ENCODE measurements at regions of chr11 and their contacts with region 1.

Region 1: DNA sequence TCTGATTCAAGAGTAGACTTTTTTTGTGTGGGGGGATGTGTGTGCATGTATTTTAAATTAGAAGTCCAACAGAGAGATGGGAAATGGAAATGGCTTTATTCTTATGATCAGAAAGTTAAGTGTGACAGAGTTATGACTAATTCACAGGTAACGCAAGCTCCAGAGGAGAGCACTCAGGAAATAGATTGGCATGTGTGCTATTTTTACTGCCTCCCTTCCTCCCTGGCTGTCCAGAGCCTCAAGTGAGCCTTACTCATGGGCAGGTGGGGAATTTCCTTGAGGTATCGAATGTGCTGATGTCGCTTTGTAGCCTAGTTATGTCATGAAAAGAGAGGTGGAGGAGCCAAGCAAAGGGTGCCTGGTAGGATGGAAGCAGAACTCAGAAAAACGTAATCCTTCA is 70.3 kb upstream of the BDNF start:
- DNase-seq: no peak
- H3K4me3 ChIP-seq: no peak overlapping the region
- H3K27ac ChIP-seq: no peak overlapping the region
- H3K4me1 ChIP-seq: no peaks in the 10 kb centered on the region
- H3K27me3 ChIP-seq: no peaks in the 10 kb centered on the region
- CTCF ChIP-seq: no peak
- POLR2A ChIP-seq: no peak

Region 2: DNA sequence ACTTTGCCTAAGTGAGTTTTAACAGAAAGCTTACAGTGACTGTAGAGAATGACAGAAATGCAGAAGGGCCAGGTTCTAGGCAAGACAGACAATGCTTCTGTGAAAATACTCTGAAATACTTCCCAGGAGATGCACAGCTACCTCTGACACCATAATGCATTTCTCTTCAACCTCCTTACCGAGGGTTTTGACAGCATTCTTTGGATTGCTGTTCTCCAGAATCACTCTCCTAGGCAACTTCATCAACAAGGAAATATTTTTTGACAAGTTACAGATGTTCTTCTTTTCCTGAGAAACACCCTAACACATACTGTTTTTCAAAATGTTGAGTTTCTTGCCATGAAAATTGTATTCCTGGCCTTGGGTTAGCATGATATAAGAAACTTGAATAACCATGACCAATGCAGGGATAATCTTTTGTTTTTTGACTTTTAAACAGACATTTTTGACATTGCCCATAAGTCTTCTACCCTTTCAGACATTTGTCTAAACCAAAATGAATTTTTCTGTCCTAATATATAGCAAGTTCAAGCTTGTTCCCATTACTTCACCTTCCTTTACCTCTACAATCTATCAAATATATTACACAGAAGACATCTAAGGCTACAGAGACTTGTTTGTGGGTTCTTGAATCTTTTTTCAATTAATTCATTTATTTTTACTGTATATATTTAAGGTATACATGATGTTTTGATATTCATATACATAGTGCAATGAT is 515.7 kb before region 1 on chr11:
- intact Hi-C with region 1: loop called (anchors 5 kb)
- DNase-seq: no peak
- H3K4me3 ChIP-seq: no peak overlapping the region
- H3K27ac ChIP-seq: no peak overlapping the region
- H3K4me1 ChIP-seq: no peaks in the 10 kb centered on the region
- H3K27me3 ChIP-seq: no peaks in the 10 kb centered on the region
- CTCF ChIP-seq: no peak
- POLR2A ChIP-seq: no peak

Region 3: DNA sequence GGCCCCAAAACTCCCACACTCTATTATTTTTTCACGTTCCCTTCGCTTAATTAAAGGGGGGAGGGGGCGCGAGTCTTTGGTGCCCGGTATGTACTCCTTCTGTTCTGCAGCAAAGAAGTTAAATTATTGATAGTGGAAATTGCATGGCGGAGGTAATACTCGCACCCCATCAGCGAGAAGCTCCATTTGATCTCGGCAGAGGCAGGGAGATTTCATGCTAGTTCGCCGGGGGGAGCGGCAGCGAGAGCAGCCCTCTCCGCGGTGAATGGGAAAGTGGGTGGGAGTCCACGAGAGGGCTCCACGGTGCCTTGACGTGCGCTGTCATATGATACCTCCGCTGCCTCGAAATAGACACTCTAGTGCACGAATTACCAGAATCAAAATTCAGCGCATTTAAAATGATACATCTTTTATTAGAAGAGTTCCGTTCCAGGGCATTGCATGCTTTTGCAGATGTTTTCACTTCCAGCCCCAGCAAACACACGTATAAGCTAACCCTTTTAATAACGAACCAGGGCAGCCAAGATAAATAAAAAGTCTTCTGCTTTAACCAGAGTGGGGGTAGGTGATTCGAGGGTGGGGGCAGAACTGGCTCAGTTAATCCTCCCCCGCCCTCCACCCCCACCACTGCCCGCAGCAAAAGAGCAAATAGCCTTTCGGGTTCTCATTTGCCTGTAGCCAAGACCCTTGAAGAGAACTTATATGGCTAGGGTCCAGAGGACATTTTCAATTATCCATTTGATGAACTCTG is 69.0 kb before region 1 on chr11:
- intact Hi-C with region 1: loop called (anchors 2 kb)
- DNase-seq: no peak
- H3K4me3 ChIP-seq: peak overlapping the region; percentile 52 to 82 (median 61)
- H3K27ac ChIP-seq: no peak overlapping the region
- H3K4me1 ChIP-seq: peaks cover 3 to 14% of the 10 kb centered on the region in 2 donors
- H3K27me3 ChIP-seq: peaks cover 0 to 12% of the 10 kb centered on the region in 2 donors
- CTCF ChIP-seq: no peak
- POLR2A ChIP-seq: no peak

Measured in breast epithelium (tissue), 4 donors.